ENCODE measurements at regions of chr9 and their contacts with region 1.

Region 1: DNA sequence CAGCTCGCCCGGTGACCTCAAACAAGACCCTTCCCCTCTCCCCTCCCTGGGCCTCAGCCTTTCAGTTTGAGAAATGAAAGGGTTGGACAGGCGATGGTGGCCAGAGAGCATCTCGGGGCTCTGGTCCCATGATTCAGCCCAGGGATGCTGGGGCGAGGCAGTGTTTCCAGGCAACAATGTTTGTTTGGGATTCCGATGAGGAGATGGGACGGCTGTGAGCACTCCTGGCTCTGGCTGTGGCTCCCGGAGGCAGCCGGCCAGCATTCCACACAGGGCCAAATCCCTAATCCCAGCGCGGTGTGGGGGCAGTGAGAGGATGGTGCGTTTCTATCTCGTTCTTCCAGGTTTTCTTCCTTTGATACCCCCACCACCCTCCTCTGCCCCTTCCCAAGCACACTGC is 66.0 kb downstream of the HMCN2 start:
- DNase-seq: peak; percentile 42 to 74
- ATAC-seq: peak; percentile 25 to 42
- H3K4me3 ChIP-seq: no peak overlapping the region
- H3K27ac ChIP-seq: peak overlapping the region; percentile 47 to 66 (median 55)
- H3K4me1 ChIP-seq: no peaks in the 10 kb centered on the region
- H3K27me3 ChIP-seq: peaks cover 38 to 53% (median 49%) of the 10 kb centered on the region in 3 donors
- CTCF ChIP-seq: no peak
- POLR2A ChIP-seq: no peak

Region 2: DNA sequence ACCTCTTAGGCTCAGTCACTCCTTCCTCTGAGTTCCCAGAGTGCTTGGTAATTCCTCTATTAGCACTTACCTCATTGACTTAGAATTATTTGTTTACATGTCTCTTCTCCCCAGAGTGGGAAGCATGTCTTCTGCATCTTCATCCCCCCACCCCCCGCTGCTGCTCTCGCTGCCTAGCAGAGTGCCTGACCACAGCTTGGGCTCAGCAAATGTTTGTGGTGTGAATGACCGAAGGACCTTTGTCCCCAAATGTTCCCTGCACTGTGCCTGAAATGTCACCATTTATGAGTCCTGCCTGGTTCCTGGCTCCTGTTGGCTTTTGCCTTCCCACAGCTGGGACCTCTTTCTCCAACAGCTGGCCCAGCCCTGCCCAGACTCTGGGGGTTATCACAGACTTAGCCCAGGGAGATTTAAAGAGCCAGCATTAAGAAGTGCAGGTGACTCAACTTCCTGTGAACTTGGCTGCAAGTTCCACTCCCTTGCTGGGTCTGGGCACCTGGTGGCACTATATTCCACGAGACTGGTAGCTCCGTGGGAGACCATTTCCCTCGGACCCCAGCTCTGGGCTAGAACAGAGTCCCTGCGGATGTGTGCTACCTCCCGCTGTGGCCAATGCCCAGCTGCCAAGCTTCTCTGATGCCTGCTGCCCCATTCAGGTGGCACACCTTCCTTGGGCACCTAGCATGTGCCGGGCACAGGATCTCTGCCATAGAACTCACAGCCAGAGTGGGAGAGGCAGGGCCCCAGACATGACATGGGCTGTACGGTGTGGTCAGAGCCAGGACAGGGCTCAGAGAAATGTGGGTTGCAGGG is 67.8 kb before region 1 on chr9:
- in situ Hi-C with region 1: no loop called
- intact Hi-C with region 1: loop called (anchors 5 kb)
- DNase-seq: peak in 1 of 2 donors; percentile 67
- ATAC-seq: peak; percentile 13 to 26
- H3K4me3 ChIP-seq: no peak overlapping the region
- H3K27ac ChIP-seq: peak overlapping the region; percentile 23 to 73 (median 45)
- H3K4me1 ChIP-seq: peaks cover 0 to 6% of the 10 kb centered on the region in 2 donors
- H3K27me3 ChIP-seq: peaks cover 60 to 68% (median 62%) of the 10 kb centered on the region in 3 donors
- CTCF ChIP-seq: no peak
- POLR2A ChIP-seq: no peak

Region 3: DNA sequence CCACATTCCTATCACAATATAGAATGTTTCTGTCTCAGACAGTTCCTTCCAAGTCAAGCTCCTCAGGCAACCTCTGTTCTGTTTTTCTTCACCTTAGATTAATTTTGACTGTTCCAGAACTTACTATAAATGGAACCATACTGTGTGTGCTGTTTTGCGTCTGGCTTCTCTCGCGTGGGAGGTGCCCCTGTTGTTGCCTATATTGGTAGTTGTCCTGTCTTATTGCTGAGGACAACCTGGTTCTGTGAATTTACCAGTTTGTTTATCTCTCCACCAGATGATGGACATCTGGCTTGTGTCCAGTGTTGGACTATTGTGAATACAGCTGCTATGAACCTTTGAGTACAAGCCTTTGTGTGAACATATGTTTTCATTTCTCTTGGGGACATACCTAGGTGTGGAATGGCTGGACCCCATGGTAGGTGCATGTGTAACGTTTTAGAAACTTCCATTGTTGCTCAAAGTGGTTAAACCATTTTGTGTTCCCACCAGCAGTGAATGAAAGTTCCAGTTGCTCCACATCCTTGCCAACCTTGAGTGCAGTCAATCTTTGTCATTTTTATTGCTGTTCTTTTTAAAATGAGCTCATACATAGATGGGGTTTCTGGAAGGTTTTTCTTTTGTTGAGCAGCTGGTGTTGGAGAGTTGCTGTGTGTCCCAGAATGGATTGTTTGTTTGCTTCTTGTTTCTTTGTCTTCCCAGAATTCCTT is 47.9 kb before region 1 on chr9:
- in situ Hi-C with region 1: no loop called
- intact Hi-C with region 1: no loop called
- DNase-seq: no peak
- ATAC-seq: peak in 1 of 2 donors; percentile 13
- H3K4me3 ChIP-seq: no peak overlapping the region
- H3K27ac ChIP-seq: peak overlapping the region in 3 of 4 donors; percentile 37 to 54 (median 38)
- H3K4me1 ChIP-seq: peaks cover 3 to 7% of the 10 kb centered on the region in 2 donors
- H3K27me3 ChIP-seq: peaks cover 19 to 52% (median 39%) of the 10 kb centered on the region in 3 donors
- CTCF ChIP-seq: no peak
- POLR2A ChIP-seq: no peak

Region 4: DNA sequence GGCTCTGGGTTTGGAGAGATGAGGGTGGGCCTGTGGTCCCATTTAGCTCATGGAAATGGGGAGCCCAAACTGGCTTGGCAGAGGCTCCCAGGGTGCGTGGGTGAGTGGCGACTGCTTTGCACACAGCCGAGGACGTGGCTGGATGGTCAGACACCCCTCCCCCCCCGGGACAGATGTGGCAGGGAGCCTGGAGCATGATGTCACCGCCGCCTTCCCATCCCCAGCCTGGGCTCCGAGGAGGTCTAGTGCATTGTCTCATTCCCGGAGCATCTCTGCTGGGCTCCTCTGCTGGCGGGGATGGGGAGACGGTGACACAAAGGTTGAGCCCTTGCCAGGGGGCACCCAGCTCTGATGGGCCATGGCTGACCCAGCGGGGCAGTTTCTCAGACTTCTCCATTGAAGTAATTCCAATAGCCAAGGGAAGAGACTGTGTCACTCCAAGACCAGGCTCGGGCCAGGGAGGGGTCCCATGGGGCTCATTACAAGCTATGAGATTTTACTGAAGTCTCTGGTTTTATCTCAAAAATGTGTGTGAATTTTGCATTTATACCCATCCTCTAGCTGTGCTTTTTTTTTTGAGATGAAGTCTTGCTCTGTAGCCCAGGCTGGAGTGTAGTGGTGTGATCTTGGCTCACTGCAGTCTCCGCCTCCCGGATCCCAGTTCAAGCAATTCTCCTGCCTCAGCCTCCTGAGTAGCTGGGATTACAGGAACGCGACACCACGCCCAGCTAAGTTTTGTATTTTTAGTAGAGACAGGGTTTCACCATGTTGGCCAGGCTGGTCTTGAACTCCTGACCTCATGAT is 29.9 kb before region 1 on chr9:
- in situ Hi-C with region 1: no loop called
- intact Hi-C with region 1: no loop called
- DNase-seq: peak in 1 of 2 donors; percentile 60
- ATAC-seq: peak in 1 of 2 donors; percentile 44
- H3K4me3 ChIP-seq: no peak overlapping the region
- H3K27ac ChIP-seq: peak overlapping the region; percentile 46 to 65 (median 58)
- H3K4me1 ChIP-seq: no peaks in the 10 kb centered on the region
- H3K27me3 ChIP-seq: peaks cover 9 to 17% (median 13%) of the 10 kb centered on the region in 3 donors
- CTCF ChIP-seq: no peak
- POLR2A ChIP-seq: no peak

Region 5: DNA sequence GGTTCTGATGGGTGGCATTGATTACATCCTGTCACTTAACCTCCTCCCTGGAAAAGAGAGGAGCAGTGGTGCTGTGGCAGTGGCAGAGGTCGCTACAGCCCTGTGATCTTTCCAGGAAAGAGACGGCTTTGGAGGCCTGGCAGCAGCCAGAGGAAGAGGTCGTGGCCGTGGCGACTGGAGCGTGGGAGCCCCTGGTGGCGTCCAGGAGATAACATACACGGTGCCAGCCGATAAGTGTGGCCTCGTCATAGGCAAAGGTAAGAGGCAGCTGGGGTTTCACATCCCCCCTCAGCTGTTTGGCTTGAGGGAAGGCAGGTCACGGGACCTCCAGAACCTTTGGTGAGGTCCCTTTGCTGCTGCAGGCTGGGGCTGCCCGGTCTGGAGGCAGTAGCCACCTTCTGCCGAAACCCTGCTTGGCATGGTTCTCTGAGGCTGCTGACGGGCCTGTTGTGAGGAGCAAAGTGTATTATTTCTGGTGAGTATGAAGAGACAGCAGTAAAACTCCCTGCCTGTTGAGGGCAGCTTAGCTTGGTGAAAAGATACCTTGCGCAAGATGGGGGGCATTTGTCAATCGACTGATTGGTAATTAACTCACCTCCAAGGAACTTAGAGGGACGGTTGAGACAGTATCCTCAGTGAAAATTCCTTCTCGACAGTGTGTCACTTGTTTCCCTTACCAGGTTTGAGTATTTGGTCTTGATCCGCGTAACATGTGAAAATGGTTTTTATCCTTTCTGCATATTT is 294.8 kb after region 1 on chr9:
- in situ Hi-C with region 1: no loop called
- intact Hi-C with region 1: no loop called
- DNase-seq: no peak
- ATAC-seq: no peak
- H3K4me3 ChIP-seq: no peak overlapping the region
- H3K27ac ChIP-seq: no peak overlapping the region
- H3K4me1 ChIP-seq: no peaks in the 10 kb centered on the region
- H3K27me3 ChIP-seq: no peaks in the 10 kb centered on the region
- CTCF ChIP-seq: no peak
- POLR2A ChIP-seq: no peak

Measured in gastrocnemius medialis (tissue), 4 donors.